ENCODE measurements at regions of chr1 and their contacts with region 1.

Region 1: GRCh38 chr1:205121660-205122488 is at the start of gene RBBP5:
- DNase-seq: peak; percentile 100
- H3K4me3 Mint-ChIP-seq: peak within 1 kb of the TSS; percentile 96
- H3K27ac Mint-ChIP-seq: peak within 1 kb of the TSS; percentile 100
- H3K4me1 Mint-ChIP-seq: peaks cover 11% of the 10 kb centered on the region
- H3K27me3 Mint-ChIP-seq: no peaks in the 10 kb centered on the region
- CTCF ChIP-seq: peak; percentile 90
- total RNA-seq, gene RBBP5: 24.8 and 30.4 TPM in 2 replicates

Region 2: DNA sequence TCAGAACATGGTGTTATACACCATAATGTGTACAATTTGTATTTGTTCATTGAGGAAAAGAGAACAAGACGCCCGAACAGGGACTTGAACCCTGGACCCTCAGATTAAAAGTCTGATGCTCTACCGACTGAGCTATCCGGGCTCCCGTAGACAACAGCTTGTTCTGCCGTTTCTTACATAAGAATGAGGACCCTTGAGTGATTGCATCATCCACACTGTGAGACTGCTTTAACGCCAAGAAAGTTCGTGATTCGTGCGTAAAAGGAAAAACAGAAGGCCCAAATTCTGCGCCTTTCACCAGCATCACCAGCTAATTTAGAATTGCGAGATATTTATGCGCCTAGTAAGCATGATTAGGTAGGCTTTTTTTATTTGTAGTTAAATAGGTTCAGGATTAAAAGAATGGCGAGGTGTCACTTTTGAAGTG is 614.9 kb before region 1 on chr1:
- CTCF ChIA-PET with region 1: no interaction called
- POLR2A ChIA-PET with region 1: interaction called, 10 read pairs
- intact Hi-C with region 1: no loop called
- DNase-seq: peak; percentile 98
- H3K4me3 Mint-ChIP-seq: peak overlapping the region; percentile 77
- H3K27ac Mint-ChIP-seq: peak overlapping the region; percentile 90
- H3K4me1 Mint-ChIP-seq: peaks cover 29% of the 10 kb centered on the region
- H3K27me3 Mint-ChIP-seq: no peaks in the 10 kb centered on the region
- CTCF ChIP-seq: no peak

Region 3: DNA sequence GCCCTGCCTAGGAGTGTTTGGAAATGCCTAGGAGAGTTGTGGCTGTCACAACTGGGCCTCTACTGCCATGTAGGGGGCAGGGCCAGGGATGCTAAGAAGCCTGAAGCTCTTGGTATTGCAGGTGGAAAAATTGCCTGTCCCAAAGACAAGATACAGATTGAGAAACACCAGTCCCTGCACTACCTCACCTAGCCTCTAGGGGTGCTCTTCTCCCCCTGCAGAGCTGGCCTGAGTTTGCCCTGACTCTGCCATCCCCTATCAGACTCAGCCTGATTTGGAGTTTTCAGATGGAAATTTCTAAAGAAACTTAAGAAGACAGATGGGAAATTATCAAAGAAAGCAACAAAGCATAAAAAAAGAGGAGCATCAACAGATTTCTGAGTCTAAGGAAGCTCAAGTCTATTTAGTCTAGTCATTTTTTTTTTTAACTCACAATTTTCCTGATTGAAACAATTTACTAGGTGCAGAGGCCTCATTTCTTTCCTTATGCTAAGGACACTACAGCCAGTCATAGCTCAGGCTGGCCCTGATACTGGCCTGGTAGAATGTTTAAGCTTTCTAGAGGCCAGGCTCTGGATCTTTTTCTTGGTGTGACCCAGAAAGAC is 374.9 kb before region 1 on chr1:
- CTCF ChIA-PET with region 1: no interaction called
- POLR2A ChIA-PET with region 1: no interaction called
- intact Hi-C with region 1: no loop called
- DNase-seq: peak; percentile 79
- H3K4me3 Mint-ChIP-seq: no peak overlapping the region
- H3K27ac Mint-ChIP-seq: no peak overlapping the region
- H3K4me1 Mint-ChIP-seq: no peaks in the 10 kb centered on the region
- H3K27me3 Mint-ChIP-seq: peaks cover 48% of the 10 kb centered on the region
- CTCF ChIP-seq: peak; percentile 99

Region 4: GRCh38 chr1:205077158-205077933 is 44.5 kb before region 1 on chr1:
- CTCF ChIA-PET with region 1: interaction called, 8 read pairs
- POLR2A ChIA-PET with region 1: interaction called, 53 read pairs
- intact Hi-C with region 1: loop called (anchors 5 kb)
- DNase-seq: no peak
- H3K4me3 Mint-ChIP-seq: no peak overlapping the region
- H3K27ac Mint-ChIP-seq: no peak overlapping the region
- H3K4me1 Mint-ChIP-seq: peaks cover 28% of the 10 kb centered on the region
- H3K27me3 Mint-ChIP-seq: no peaks in the 10 kb centered on the region
- CTCF ChIP-seq: no peak

Region 5: DNA sequence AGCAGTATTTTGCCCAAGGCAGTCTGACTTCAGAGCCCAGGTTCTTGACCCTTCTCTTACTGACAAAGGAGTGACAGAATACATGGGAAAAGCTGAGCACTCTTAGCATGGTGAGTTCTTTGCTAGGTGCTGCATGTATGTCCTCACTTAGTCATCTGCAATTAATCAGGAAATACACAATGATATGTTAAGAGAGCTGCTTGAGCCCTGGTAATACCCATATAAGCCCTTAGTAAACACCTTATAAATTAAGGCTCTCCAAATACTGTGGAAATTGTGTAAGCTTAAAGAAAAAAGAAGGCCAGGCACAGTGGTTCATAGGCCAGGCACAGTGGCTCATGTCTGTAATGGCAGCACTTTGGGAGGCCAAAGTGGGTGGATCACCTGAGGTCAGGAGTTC is 23.6 kb before region 1 on chr1:
- CTCF ChIA-PET with region 1: interaction called, 11 read pairs
- POLR2A ChIA-PET with region 1: interaction called, 52 read pairs
- intact Hi-C with region 1: no loop called
- DNase-seq: no peak
- H3K4me3 Mint-ChIP-seq: no peak overlapping the region
- H3K27ac Mint-ChIP-seq: no peak overlapping the region
- H3K4me1 Mint-ChIP-seq: no peaks in the 10 kb centered on the region
- H3K27me3 Mint-ChIP-seq: no peaks in the 10 kb centered on the region
- CTCF ChIP-seq: no peak

Region 6: DNA sequence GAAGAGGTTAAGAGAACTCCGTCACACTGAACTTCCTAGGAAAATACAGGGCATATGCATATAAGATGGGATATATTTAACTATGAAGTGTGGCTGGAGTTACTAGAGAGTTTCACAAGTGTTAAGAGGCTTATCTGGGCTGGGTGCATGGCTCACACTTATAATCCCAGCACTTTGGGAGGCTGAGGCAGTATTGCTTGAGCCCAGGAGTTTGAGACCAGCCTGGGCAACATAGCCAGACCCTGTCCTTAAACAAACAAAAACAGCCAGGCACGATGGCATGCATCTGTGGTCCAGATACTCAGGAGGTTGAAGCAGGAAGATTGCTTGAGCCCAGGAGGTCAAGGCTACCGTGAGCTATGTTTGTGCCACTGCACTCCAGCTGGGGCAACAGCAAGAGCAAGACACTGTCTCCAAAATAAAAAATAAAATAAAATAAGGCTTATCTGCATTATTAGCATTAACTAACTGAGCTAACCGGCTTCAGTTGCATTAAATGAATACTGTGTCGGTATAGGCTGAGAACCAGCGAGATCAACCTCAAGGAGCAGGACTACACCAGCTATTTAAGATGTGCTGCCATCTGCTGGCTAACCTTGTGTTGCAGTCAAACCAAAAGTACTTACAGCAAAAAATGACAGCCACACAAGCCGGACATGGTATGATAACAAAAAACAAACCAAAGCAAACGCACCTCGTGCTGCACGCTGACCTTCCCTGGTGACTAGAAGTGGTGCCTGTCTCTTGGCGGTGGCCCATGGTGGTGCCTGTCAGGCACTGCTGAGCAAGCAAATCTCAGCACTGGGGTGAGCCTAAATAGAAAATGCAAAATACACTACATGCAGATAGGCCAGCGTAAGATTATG is 19.6 kb after region 1 on chr1:
- CTCF ChIA-PET with region 1: interaction called, 231 read pairs
- POLR2A ChIA-PET with region 1: interaction called, 33 read pairs
- intact Hi-C with region 1: loop called (anchors 1 kb)
- DNase-seq: peak; percentile 91
- H3K4me3 Mint-ChIP-seq: no peak overlapping the region
- H3K27ac Mint-ChIP-seq: no peak overlapping the region
- H3K4me1 Mint-ChIP-seq: peaks cover 19% of the 10 kb centered on the region
- H3K27me3 Mint-ChIP-seq: no peaks in the 10 kb centered on the region
- CTCF ChIP-seq: peak; percentile 82

Region 7: GRCh38 chr1:205211169-205211838 is 89.4 kb after region 1 on chr1 and contains the start of gene DSTYK:
- CTCF ChIA-PET with region 1: interaction called, 6 read pairs
- POLR2A ChIA-PET with region 1: interaction called, 36 read pairs
- intact Hi-C with region 1: loop called (anchors 1 kb)
- DNase-seq: peak; percentile 99
- H3K4me3 Mint-ChIP-seq: peak within 1 kb of the TSS; percentile 73
- H3K27ac Mint-ChIP-seq: peak within 1 kb of the TSS; percentile 94
- H3K4me1 Mint-ChIP-seq: peaks cover 12% of the 10 kb centered on the region
- H3K27me3 Mint-ChIP-seq: peaks cover 12% of the 10 kb centered on the region
- CTCF ChIP-seq: no peak
- total RNA-seq, gene DSTYK: 18.4 and 21.5 TPM in 2 replicates

Region 8: GRCh38 chr1:205321164-205321958 is 199.5 kb after region 1 on chr1 and contains the start of gene NUAK2:
- CTCF ChIA-PET with region 1: interaction called, 4 read pairs
- POLR2A ChIA-PET with region 1: interaction called, 6 read pairs
- intact Hi-C with region 1: loop called (anchors 5 kb)
- DNase-seq: peak; percentile 97
- H3K4me3 Mint-ChIP-seq: peak within 1 kb of the TSS; percentile 99
- H3K27ac Mint-ChIP-seq: peak within 1 kb of the TSS; percentile 54
- H3K4me1 Mint-ChIP-seq: peaks cover 56% of the 10 kb centered on the region
- H3K27me3 Mint-ChIP-seq: no peaks in the 10 kb centered on the region
- CTCF ChIP-seq: peak; percentile 64
- total RNA-seq, gene NUAK2: 2.8 and 6.0 TPM in 2 replicates

Region 9: GRCh38 chr1:205354259-205354904 is 232.5 kb after region 1 on chr1:
- CTCF ChIA-PET with region 1: no interaction called
- POLR2A ChIA-PET with region 1: no interaction called
- intact Hi-C with region 1: no loop called
- DNase-seq: peak; percentile 92
- H3K4me3 Mint-ChIP-seq: no peak overlapping the region
- H3K27ac Mint-ChIP-seq: no peak overlapping the region
- H3K4me1 Mint-ChIP-seq: peaks cover 13% of the 10 kb centered on the region
- H3K27me3 Mint-ChIP-seq: peaks cover 23% of the 10 kb centered on the region
- CTCF ChIP-seq: peak; percentile 91

Measured in MCF 10A (cell line).